Activated CD4-positive, alpha-beta T cell treated with anti-CD3 and anti-CD28 coated beads for 36 hours (primary cell): ENCODE measurements at regions of chr11 and their contacts with region 1.

Region 1: DNA sequence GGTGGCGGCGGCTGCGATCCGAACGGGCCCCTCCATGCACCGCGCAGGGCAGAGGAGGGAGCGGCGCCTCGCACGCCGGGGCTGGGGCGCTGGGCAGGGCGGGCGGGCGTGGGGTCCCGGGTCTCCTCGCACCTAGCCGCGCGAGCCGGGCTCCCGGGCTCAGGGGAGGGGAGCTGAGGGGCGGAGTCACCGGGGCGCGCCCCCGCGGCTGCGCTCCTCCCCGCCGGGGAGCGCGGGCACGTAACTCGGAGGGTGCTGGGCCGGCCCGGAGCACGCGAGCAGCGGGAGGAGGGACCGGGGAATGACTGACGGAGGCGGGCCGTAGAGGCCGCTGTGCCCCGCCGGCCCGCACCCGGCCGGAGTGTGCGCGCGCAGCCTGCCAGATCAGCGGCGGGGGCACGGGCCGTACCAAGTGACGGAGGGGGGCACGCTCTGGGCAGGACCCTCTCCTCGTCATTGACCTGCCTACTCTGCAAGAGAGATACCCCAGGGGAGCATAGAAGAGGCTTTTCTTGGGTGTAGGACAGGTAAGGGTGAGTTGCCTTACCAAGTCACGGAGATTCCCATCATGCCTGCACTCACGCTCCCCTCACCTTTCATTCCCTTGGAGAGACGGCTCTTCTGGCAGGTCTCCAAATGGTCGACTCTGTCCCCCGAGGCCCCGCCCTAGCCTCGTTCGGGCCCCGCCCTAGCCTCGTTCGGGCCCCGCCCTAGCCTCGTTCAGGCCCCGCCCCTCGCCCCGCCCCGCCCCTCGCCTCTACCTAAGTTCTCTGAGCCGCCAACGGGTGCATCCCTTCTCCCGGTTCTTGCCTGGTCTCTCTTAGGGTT is at the start of gene CDON:
- DNase-seq: peak; percentile 95
- ATAC-seq: peak; percentile 97
- H3K4me3 Mint-ChIP-seq: peak within 1 kb of the TSS; percentile 74
- H3K27ac Mint-ChIP-seq: peak within 1 kb of the TSS; percentile 94
- H3K4me1 Mint-ChIP-seq: peaks cover 5% of the 10 kb centered on the region
- H3K27me3 Mint-ChIP-seq: peaks cover 12% of the 10 kb centered on the region
- total RNA-seq, gene CDON: 1.8 to 3.2 TPM

Region 2: DNA sequence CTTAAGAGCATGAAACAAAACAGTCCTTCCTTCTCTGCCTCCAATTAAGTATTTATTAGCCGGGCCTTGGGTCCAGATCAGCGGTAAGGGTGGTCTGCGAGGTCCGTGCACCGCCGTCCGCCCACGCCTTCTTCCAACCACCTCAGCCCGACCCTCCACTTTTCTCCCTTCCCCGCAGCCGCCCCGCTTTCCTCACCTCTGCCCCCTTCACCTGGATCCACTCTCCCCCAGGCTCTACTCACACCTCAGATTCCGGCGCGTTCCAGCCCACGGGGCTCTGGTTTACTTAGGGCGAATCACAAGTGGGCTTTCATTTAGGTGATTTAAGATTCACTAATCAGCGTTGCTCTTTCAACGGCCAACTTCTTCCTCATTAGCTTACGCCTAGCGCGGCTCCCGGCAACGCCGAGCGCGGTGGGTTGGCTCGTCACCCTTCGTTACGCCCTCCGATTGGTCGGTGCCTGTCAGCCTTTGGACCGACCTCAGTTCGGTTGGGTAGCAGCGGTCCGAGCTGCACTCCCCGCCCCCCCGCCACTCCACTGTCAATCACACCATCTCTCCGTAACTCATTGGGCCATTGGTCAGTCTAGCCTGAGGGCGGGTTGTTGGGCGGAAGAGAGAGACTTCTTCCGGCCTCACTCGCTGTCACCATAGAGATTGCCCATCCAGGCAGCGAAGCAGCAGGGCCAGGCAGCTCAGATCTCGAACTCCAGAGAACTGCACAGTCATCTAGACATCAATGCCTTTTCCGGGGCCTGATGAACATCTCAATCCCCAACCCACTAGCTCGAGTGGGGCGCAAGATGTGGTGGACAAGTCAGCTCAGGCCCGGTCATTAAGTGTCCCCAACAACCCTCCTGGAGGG is 951.3 kb before region 1 on chr11 and contains the start of gene TMEM218:
- CTCF ChIA-PET with region 1: no interaction called
- POLR2A ChIA-PET with region 1: no interaction called
- intact Hi-C with region 1: loop called in 1 of 2 experiments (anchors 2 kb)
- DNase-seq: peak; percentile 98
- ATAC-seq: peak; percentile 99
- H3K4me3 Mint-ChIP-seq: peak within 1 kb of the TSS; percentile 93
- H3K27ac Mint-ChIP-seq: peak within 1 kb of the TSS; percentile 95
- H3K4me1 Mint-ChIP-seq: peaks cover 18% of the 10 kb centered on the region
- H3K27me3 Mint-ChIP-seq: no peaks in the 10 kb centered on the region
- total RNA-seq, gene TMEM218: 11.3 TPM

Region 3: DNA sequence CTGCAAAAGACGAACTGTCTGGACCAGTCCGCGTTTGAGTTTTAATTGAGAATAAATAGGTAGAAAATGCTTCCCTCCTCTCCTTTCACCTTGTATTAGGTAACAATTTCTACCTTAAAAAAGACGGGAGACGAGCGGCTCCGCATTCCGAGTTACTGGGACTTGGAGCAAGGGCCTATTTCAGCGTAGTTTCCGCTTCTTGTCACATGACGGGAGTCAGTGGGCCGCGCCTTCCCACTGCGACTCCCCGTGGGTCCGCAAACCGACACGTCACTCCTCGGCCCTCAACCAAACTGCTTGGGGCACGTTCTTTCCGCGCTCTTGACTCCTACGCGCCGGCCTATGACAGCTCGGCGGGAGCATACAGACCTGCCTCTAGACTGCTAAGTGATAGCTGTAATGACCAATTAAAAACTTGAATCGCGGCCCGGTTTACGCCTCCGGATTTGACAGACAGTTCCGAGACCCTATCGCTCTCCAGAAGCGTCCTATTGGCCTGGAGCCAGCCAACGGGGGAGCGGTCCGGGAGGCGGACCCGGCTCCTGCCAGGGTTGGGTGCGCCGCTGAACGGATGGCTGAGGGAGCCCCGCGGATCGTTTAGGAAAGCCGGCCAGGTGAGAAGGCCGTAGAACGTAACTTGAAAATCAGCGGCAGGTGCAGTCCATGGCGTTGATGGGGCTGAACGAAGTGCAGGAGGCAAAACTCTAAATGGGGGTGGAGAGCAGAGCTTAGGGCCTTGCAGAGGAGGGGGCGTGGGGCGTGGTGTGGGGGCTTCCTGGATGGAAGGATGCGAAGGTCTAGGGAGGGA is 470.4 kb before region 1 on chr11 and contains the start of gene STT3A:
- CTCF ChIA-PET with region 1: no interaction called
- POLR2A ChIA-PET with region 1: no interaction called
- intact Hi-C with region 1: loop called in 1 of 2 experiments (anchors 1 kb)
- DNase-seq: peak; percentile 99
- ATAC-seq: peak; percentile 93
- H3K4me3 Mint-ChIP-seq: peak within 1 kb of the TSS; percentile 97
- H3K27ac Mint-ChIP-seq: peak within 1 kb of the TSS; percentile 95
- H3K4me1 Mint-ChIP-seq: peaks cover 48% of the 10 kb centered on the region
- H3K27me3 Mint-ChIP-seq: no peaks in the 10 kb centered on the region
- total RNA-seq, gene STT3A: 127 to 128 TPM

Region 4: GRCh38 chr11:125902927-125903710 is 159.8 kb before region 1 on chr11 and contains the start of gene PUS3:
- CTCF ChIA-PET with region 1: no interaction called
- POLR2A ChIA-PET with region 1: no interaction called
- intact Hi-C with region 1: loop called in 1 of 2 experiments (anchors 1 kb)
- DNase-seq: peak; percentile 94
- ATAC-seq: peak; percentile 97
- H3K4me3 Mint-ChIP-seq: peak within 1 kb of the TSS; percentile 95
- H3K27ac Mint-ChIP-seq: peak within 1 kb of the TSS; percentile 97
- H3K4me1 Mint-ChIP-seq: peaks cover 35% of the 10 kb centered on the region
- H3K27me3 Mint-ChIP-seq: peaks cover 17% of the 10 kb centered on the region
- total RNA-seq, gene PUS3: 14.3 to 19.9 TPM

Region 5: GRCh38 chr11:126268708-126269579 is 206.1 kb after region 1 on chr11 and contains the starts of genes FOXRED1 and SRPRA:
- CTCF ChIA-PET with region 1: no interaction called
- POLR2A ChIA-PET with region 1: no interaction called
- intact Hi-C with region 1: loop called (anchors 1 kb)
- DNase-seq: peak; percentile 100
- ATAC-seq: peak; percentile 100
- H3K4me3 Mint-ChIP-seq: peak within 1 kb of the TSS; percentile 86
- H3K27ac Mint-ChIP-seq: peak within 1 kb of the TSS; percentile 95
- H3K4me1 Mint-ChIP-seq: peaks cover 38% of the 10 kb centered on the region
- H3K27me3 Mint-ChIP-seq: no peaks in the 10 kb centered on the region
- total RNA-seq, gene FOXRED1: 39.0 to 43.7 TPM
- total RNA-seq, gene SRPRA: 131 to 139 TPM

Region 6: DNA sequence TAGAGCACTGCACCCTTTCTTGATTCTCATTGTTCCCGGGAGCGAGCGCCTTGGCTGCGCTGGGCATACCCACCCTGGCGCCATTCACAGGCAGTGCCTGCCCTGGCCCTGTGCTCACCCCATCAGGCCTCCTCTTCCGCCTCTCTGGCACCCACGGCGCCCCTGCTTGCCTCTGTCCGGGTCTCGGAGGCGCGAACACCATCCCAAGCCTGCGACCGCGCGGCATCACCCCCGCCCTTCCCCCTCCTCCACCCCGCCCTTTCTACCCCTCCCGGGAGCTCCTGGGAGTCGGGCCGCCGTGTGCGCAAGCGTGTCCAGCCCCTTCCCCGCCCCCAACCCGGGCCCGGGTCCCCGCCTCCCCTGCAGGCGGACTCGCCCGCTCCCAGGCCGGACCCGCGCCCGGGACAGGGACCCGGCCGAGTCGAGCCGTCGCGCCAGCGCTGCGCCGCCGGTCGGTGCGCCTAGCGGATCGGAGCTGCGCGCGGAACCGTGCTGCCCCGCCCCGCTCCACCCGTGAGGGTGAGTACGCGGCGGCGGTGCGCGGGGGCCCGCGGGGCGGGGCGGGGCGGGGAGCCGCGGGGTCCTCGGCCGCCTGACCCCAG is 292.5 kb after region 1 on chr11 and contains the start of gene ST3GAL4:
- CTCF ChIA-PET with region 1: no interaction called
- POLR2A ChIA-PET with region 1: no interaction called
- intact Hi-C with region 1: loop called in 1 of 2 experiments (anchors 1 kb)
- DNase-seq: peak; percentile 86
- ATAC-seq: peak; percentile 77
- H3K4me3 Mint-ChIP-seq: peak within 1 kb of the TSS; percentile 93
- H3K27ac Mint-ChIP-seq: peak within 1 kb of the TSS; percentile 88
- H3K4me1 Mint-ChIP-seq: peaks cover 29% of the 10 kb centered on the region
- H3K27me3 Mint-ChIP-seq: no peaks in the 10 kb centered on the region
- total RNA-seq, gene ST3GAL4: 7.5 to 9.1 TPM